ENCODE measurements at regions of chr7 and their contacts with region 1.

Region 1: DNA sequence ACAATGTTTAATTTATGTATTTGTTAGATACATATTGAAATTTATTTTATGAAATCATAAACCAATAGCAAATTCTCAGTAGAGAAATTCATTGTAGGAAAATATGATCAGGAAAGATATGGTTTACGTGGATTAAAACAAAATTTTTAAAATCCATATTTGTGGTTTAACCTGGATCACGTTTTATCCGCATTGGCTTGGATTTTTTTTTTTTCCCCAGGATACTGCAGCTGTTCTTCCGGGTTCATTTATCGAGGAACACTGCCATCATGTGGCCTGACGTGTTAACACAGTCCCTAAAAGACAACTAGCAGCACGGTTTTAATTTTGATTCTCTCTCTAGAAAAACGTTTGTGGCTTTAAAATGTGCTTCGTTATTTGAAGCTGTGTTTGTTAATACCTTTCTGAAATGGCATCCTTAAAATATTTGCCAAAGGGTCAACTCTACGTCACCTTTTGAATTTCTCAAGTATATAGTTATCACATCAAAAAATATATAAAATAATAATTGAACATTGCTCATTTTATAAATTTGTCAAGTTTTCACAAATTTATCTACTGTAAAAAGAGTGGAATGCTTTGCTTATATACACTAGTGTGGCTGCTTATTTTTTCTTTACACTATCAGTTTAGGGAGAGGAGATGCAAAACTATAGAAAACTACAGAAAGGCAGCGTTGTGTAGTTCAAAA is 8.7 kb upstream of the ASB4 start:
- DNase-seq: peak; percentile 5 to 74 (median 26)
- ATAC-seq: peak; percentile 60
- H3K4me3 ChIP-seq: no peak overlapping the region
- H3K4me3 Mint-ChIP-seq: no peak overlapping the region
- H3K27ac ChIP-seq: no peak overlapping the region
- H3K27ac Mint-ChIP-seq: no peak overlapping the region
- H3K4me1 ChIP-seq: no peaks in the 10 kb centered on the region
- H3K4me1 Mint-ChIP-seq: peaks cover 5% of the 10 kb centered on the region
- H3K27me3 ChIP-seq: no peaks in the 10 kb centered on the region
- H3K27me3 Mint-ChIP-seq: no peaks in the 10 kb centered on the region
- CTCF ChIP-seq: peak; percentile 79

Region 2: GRCh38 chr7:94449148-94449725 is 1027.8 kb before region 1 on chr7:
- CTCF ChIA-PET with region 1: interaction called, 14 read pairs
- POLR2A ChIA-PET with region 1: interaction called, 3 read pairs
- intact Hi-C with region 1: loop called in 1 of 2 experiments (anchors 2 kb)
- DNase-seq: peak in 3 of 14 experiments; percentile 36 to 42 (median 41)
- ATAC-seq: peak; percentile 37
- H3K4me3 ChIP-seq: no peak overlapping the region
- H3K4me3 Mint-ChIP-seq: no peak overlapping the region
- H3K27ac ChIP-seq: no peak overlapping the region
- H3K27ac Mint-ChIP-seq: no peak overlapping the region
- H3K4me1 ChIP-seq: no peaks in the 10 kb centered on the region
- H3K4me1 Mint-ChIP-seq: no peaks in the 10 kb centered on the region
- H3K27me3 ChIP-seq: peaks cover 0 to 9% of the 10 kb centered on the region in 2 experiments
- H3K27me3 Mint-ChIP-seq: peaks cover 38% of the 10 kb centered on the region
- CTCF ChIP-seq: peak; percentile 68

Region 3: GRCh38 chr7:94897541-94897940 is 579.5 kb before region 1 on chr7:
- CTCF ChIA-PET with region 1: no interaction called
- POLR2A ChIA-PET with region 1: no interaction called
- intact Hi-C with region 1: no loop called
- DNase-seq: no peak
- ATAC-seq: no peak
- H3K4me3 ChIP-seq: no peak overlapping the region
- H3K4me3 Mint-ChIP-seq: no peak overlapping the region
- H3K27ac ChIP-seq: no peak overlapping the region
- H3K27ac Mint-ChIP-seq: no peak overlapping the region
- H3K4me1 ChIP-seq: no peaks in the 10 kb centered on the region
- H3K4me1 Mint-ChIP-seq: no peaks in the 10 kb centered on the region
- H3K27me3 ChIP-seq: no peaks in the 10 kb centered on the region
- H3K27me3 Mint-ChIP-seq: no peaks in the 10 kb centered on the region
- CTCF ChIP-seq: no peak

Region 4: DNA sequence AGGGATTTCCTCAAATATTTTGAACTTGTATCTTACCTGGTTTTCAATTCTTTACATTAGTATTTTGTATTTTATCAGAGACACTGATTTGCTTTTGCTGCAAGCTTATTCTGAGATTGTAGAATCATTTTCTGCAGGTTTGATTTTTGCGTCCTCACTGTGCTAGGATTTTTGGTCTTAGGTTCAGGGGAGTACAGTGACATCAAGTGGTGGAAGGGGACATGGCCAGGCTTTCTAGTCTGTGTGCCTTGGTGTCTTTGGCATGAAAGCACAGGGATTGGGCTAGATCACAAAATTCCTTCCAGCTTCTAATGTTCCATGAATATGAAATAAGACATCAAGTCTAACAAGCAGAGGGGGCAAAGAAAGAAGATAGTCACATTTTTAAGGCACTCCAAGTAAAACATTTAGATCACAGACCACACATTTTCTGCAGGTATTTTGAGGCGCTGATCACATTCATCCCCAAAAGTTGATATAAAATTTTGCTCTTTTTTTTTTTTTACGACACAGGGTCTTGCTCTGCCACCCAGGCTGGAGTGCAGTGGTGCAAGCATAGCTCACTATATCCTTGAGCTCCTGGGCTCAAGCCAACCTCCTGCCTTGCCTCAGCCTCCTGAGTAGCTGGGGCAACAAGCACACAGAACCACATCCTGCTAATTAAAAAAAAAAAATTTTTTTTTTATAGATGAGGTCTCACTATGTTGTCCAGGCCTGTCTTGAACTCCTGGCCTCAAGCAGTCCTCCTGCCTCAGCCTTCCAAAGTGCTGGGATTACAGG is 277.1 kb before region 1 on chr7:
- CTCF ChIA-PET with region 1: no interaction called
- POLR2A ChIA-PET with region 1: no interaction called
- intact Hi-C with region 1: loop called in 1 of 2 experiments (anchors 10 kb)
- DNase-seq: peak in 1 of 14 experiments; percentile 1
- ATAC-seq: no peak
- H3K4me3 ChIP-seq: no peak overlapping the region
- H3K4me3 Mint-ChIP-seq: no peak overlapping the region
- H3K27ac ChIP-seq: no peak overlapping the region
- H3K27ac Mint-ChIP-seq: no peak overlapping the region
- H3K4me1 ChIP-seq: no peaks in the 10 kb centered on the region
- H3K4me1 Mint-ChIP-seq: no peaks in the 10 kb centered on the region
- H3K27me3 ChIP-seq: no peaks in the 10 kb centered on the region
- H3K27me3 Mint-ChIP-seq: no peaks in the 10 kb centered on the region
- CTCF ChIP-seq: no peak

Measured in CD4-positive, alpha-beta T cell (primary cell).